Activated CD4-positive, alpha-beta T cell treated with anti-CD3 and anti-CD28 coated beads, Interleukin-2, amount 10 ng/mL, durations not matched to agents 24 days and 14 days (primary cell): ENCODE measurements at regions of chr12 and their contacts with region 1.

Region 1: GRCh38 chr12:32603858-32604257 is 75.2 kb upstream of the DNM1L start:
- DNase-seq: peak; percentile 87
- H3K4me3 Mint-ChIP-seq: peak overlapping the region; percentile 4
- H3K27ac Mint-ChIP-seq: peak overlapping the region; percentile 43
- H3K4me1 Mint-ChIP-seq: peaks cover 18% of the 10 kb centered on the region
- H3K27me3 Mint-ChIP-seq: no peaks in the 10 kb centered on the region

Region 2: DNA sequence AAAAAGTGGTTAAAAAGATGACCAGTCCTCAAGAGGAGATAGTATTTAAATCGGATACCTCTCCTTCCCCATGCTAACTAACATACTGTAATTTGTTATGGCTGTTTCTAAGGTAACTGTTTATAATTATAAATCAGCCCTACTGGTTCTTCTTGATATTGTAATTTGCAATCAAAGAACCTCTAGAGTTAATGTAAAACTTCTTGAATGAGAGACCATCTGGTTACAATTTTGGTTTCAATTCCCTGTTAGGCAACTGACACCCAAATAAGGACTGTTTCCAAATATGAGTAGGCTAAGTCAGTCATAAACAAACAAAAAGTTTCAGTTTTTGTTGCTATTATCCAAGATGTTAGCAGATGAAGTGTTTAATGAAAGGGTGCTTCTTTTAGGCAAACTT is 45.0 kb before region 1 on chr12:
- intact Hi-C with region 1: loop called (anchors 1 kb)
- DNase-seq: no peak
- H3K4me3 Mint-ChIP-seq: no peak overlapping the region
- H3K27ac Mint-ChIP-seq: no peak overlapping the region
- H3K4me1 Mint-ChIP-seq: peaks cover 18% of the 10 kb centered on the region
- H3K27me3 Mint-ChIP-seq: peaks cover 4% of the 10 kb centered on the region

Region 3: GRCh38 chr12:32659908-32660440 is 56.1 kb after region 1 on chr12:
- intact Hi-C with region 1: loop called (anchors 1 kb)
- DNase-seq: no peak
- H3K4me3 Mint-ChIP-seq: no peak overlapping the region
- H3K27ac Mint-ChIP-seq: no peak overlapping the region
- H3K4me1 Mint-ChIP-seq: peaks cover 11% of the 10 kb centered on the region
- H3K27me3 Mint-ChIP-seq: no peaks in the 10 kb centered on the region